A673 (cell line): ENCODE measurements at regions of chr10 and their contacts with region 1.

Region 1: GRCh38 chr10:84065804-84066601 is 73.3 kb upstream of the GHITM start:
- DNase-seq: no peak
- H3K4me3 ChIP-seq: no peak overlapping the region
- H3K27ac ChIP-seq: no peak overlapping the region
- H3K4me1 ChIP-seq: no peaks in the 10 kb centered on the region
- H3K27me3 ChIP-seq: no peaks in the 10 kb centered on the region
- CTCF ChIP-seq: no peak

Region 2: GRCh38 chr10:84076047-84076388 is 10.0 kb after region 1 on chr10:
- CTCF ChIA-PET with region 1: no interaction called
- POLR2A ChIA-PET with region 1: interaction called, 22 read pairs
- intact Hi-C with region 1: no loop called
- DNase-seq: no peak
- H3K4me3 ChIP-seq: no peak overlapping the region
- H3K27ac ChIP-seq: no peak overlapping the region
- H3K4me1 ChIP-seq: no peaks in the 10 kb centered on the region
- H3K27me3 ChIP-seq: no peaks in the 10 kb centered on the region
- CTCF ChIP-seq: no peak

Region 3: DNA sequence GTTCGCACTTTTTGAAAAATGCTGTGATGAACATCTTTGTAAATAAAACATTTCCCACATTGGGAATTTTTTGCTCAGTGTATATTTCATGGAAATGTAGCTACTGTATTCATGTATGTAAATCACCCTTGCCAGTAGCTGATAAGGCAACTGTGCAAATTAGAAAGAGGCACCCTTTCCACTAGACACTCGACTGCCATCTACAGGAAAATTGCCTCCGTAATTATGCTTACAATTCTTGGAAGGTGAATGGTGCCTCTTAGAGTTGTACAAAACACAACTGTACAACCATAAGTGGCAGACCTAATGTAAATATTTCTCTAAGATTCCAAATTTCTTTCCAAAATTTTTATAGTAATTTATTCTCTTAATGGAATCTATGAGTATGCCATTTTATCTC is 754.1 kb after region 1 on chr10:
- CTCF ChIA-PET with region 1: no interaction called
- POLR2A ChIA-PET with region 1: no interaction called
- intact Hi-C with region 1: no loop called
- DNase-seq: peak; percentile 52
- H3K4me3 ChIP-seq: no peak overlapping the region
- H3K27ac ChIP-seq: no peak overlapping the region
- H3K4me1 ChIP-seq: no peaks in the 10 kb centered on the region
- H3K27me3 ChIP-seq: no peaks in the 10 kb centered on the region
- CTCF ChIP-seq: peak; percentile 54